GM12878 (cell line): ENCODE measurements at regions of chr16 and their contacts with region 1.

Region 1: DNA sequence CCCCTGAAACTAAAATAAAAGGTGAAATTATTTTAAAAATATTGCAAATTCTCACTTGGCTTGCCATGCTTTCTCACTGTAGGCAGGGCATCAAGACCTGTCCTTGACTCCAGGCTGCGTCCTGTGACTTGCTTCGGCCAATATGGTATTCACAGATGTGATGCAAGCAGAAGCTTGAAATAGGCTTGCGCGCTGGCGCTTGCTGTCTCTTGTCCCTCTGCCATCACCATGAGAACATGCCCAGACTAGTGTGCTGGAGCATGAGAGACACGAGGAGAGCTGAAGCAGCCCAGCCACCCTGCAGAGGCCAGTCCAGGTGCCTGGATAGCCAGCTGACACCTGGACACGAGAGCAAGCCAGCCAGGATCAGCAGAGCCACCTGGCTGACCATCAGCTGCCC is 21.8 kb upstream of the ZKSCAN2 start:
- DNase-seq: no peak
- ATAC-seq: no peak
- H3K4me3 ChIP-seq: no peak overlapping the region
- H3K27ac ChIP-seq: no peak overlapping the region
- H3K4me1 ChIP-seq: no peaks in the 10 kb centered on the region
- H3K27me3 ChIP-seq: no peaks in the 10 kb centered on the region
- CTCF ChIP-seq: no peak
- EP300 ChIP-seq: no peak
- POLR2A ChIP-seq: no peak
- RAD21 ChIP-seq: no peak

Region 2: GRCh38 chr16:25093208-25094061 is 186.1 kb before region 1 on chr16:
- CTCF ChIA-PET with region 1: no interaction called
- POLR2A ChIA-PET with region 1: no interaction called
- RAD21 ChIA-PET with region 1: no interaction called
- SMC1A ChIA-PET with region 1: no interaction called
- in situ Hi-C with region 1: no loop called
- intact Hi-C with region 1: no loop called
- DNase-seq: no peak
- ATAC-seq: peak; percentile 80
- H3K4me3 ChIP-seq: peak overlapping the region; percentile 37; the same call in 1 of the 2 replicates
- H3K27ac ChIP-seq: peak overlapping the region; percentile 69
- H3K4me1 ChIP-seq: peaks cover 23% of the 10 kb centered on the region
- H3K27me3 ChIP-seq: no peaks in the 10 kb centered on the region
- CTCF ChIP-seq: no peak
- EP300 ChIP-seq: no peak
- POLR2A ChIP-seq: no peak
- RAD21 ChIP-seq: no peak

Region 3: GRCh38 chr16:25260416-25260815 is 19.1 kb before region 1 on chr16:
- CTCF ChIA-PET with region 1: interaction called, 14 read pairs
- POLR2A ChIA-PET with region 1: no interaction called
- RAD21 ChIA-PET with region 1: interaction called, 5 read pairs
- SMC1A ChIA-PET with region 1: no interaction called
- in situ Hi-C with region 1: no loop called
- intact Hi-C with region 1: no loop called
- DNase-seq: no peak
- ATAC-seq: no peak
- H3K4me3 ChIP-seq: no peak overlapping the region
- H3K27ac ChIP-seq: no peak overlapping the region
- H3K4me1 ChIP-seq: no peaks in the 10 kb centered on the region; the same call in 1 of the 2 replicates
- H3K27me3 ChIP-seq: no peaks in the 10 kb centered on the region
- CTCF ChIP-seq: no peak
- EP300 ChIP-seq: no peak
- POLR2A ChIP-seq: no peak
- RAD21 ChIP-seq: no peak

Region 4: DNA sequence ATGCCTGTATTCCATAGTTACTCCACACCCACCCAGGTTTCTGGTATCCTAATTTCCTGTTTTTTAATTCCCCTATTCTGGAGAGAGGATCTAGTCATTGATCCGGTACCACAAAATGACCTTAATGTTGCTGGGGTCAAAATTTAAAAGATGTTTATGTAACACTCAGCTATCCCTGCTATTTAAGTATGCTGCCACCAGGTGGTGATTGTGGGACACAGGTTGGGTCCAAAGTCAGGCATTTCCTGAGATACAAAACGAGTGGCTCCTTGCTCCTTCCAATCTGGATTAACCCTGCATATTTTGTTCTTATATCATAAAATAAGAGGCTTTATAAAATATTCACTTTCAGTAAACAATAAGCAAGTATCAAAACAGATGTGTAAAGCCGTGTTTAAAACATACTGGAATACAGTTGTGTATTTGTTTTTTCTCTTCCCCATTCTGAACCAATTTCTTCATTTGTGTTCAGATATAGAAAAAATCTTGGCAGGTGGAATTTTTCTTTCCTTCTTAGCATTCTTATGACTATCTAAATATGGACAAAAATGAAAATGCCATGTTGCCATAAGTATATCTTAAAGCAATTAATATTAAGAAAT is 428.6 kb after region 1 on chr16:
- CTCF ChIA-PET with region 1: interaction called, 10 read pairs
- POLR2A ChIA-PET with region 1: no interaction called
- RAD21 ChIA-PET with region 1: interaction called, 4 read pairs
- SMC1A ChIA-PET with region 1: no interaction called
- in situ Hi-C with region 1: loop called (anchors 10 kb)
- intact Hi-C with region 1: loop called (anchors 1 kb)
- DNase-seq: no peak
- ATAC-seq: peak; percentile 57; the same call in 2 of the 3 replicates
- H3K4me3 ChIP-seq: no peak overlapping the region
- H3K27ac ChIP-seq: no peak overlapping the region
- H3K4me1 ChIP-seq: no peaks in the 10 kb centered on the region
- H3K27me3 ChIP-seq: no peaks in the 10 kb centered on the region
- CTCF ChIP-seq: peak; percentile 47 to 70 (median 56); a peak in 5 of 6 replicates
- EP300 ChIP-seq: no peak
- POLR2A ChIP-seq: no peak
- RAD21 ChIP-seq: peak; percentile 35